Activated T-helper 2 cell treated with anti-CD3 and anti-CD28 coated beads, Interferon-gamma antibody, Interleukin-2, Interleukin-4, amounts not matched to agents 10 μg/mL and 5 μg/mL and 100 μg/mL, durations not matched to agents 14 hours and 24 hours and 36 hours (primary cell): ENCODE measurements at regions of chr12 and their contacts with region 1.

Region 1: DNA sequence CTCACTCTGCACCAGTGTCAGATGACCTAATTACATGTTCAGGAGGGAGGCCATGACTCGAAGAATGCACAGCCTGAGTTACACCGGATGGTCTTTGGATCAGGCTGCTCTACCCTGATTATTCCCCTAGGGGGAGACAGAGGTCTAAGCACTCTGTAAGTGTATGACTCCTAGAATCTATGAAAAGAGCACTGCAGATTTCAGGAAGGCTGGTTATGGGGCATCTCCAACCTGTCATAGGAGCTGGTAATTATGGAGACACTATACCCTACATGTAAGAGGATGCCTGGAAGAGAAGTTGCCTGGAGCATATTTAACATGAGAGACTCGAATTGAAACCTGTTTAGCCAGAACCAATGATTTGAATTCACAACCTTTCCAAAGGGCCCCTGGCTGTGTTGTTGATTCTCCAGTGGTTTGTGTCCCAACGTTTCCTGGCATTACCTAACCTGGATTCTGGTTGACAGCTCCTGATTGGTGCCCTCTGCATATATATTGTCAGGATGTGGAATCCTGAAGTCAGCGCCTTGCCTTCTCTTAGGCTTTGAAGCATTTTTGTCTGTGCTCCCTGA is at the start of gene MUCL1:
- DNase-seq: peak; percentile 55
- H3K4me3 Mint-ChIP-seq: no peak within 1 kb of the TSS
- H3K27ac Mint-ChIP-seq: no peak within 1 kb of the TSS
- H3K4me1 Mint-ChIP-seq: peaks cover 30% of the 10 kb centered on the region
- H3K27me3 Mint-ChIP-seq: peaks cover 5% of the 10 kb centered on the region
- total RNA-seq, gene MUCL1: 0.51 TPM in 1 of 2 replicates, not detected in the other

Region 2: DNA sequence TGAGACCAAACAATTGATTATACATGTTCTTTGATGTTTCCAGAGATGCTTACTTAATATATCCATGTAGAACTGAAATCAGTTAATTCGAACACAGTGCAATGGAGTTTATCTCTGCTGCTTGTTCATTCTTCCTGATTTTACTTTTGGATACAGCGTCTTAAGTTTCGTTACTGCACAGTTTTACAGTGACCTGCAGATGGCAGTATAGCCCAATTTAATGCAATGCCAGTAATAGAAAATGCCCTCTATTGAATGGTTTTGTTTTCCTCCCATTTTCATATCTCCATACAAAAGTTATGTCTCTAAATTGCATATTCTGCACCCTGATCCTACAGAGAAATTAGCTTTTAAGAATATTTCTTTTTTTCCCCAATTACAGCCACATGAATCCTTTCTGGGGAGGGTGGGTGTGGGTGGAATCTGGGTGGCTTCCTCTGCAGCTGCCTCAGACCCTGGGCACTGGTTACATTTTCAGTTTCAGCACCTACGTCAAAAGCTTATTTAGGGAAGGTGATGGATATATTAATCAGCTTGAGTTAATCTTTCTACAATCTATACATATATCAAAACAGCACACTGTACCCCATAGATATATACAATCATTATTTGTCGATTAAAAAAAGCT is 104.8 kb before region 1 on chr12:
- intact Hi-C with region 1: loop called (anchors 2 kb)
- DNase-seq: no peak
- H3K4me3 Mint-ChIP-seq: no peak overlapping the region
- H3K27ac Mint-ChIP-seq: no peak overlapping the region
- H3K4me1 Mint-ChIP-seq: peaks cover 16% of the 10 kb centered on the region
- H3K27me3 Mint-ChIP-seq: peaks cover 17% of the 10 kb centered on the region

Region 3: DNA sequence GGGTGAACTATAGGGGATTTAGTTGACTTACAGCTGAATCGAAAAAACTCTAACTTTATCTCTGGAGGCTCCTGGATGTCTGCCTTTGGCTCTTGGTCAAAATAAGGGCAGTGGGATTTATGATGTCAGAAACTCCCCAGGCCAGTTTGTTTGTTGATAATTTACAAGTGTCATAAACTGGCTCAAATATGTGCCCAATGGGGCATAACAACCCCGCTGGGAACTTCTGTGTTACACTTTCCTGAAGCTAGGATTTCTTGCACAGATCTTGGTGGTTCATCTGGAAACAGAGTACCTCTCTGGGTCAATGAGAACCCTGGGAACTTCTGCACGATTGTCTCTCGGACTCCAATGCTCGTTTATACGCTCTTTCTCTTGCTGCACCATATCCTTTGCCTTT is 58.4 kb before region 1 on chr12:
- intact Hi-C with region 1: no loop called
- DNase-seq: no peak
- H3K4me3 Mint-ChIP-seq: no peak overlapping the region
- H3K27ac Mint-ChIP-seq: no peak overlapping the region
- H3K4me1 Mint-ChIP-seq: no peaks in the 10 kb centered on the region
- H3K27me3 Mint-ChIP-seq: peaks cover 4% of the 10 kb centered on the region

Region 4: GRCh38 chr12:54958048-54958658 is 104.1 kb after region 1 on chr12:
- intact Hi-C with region 1: loop called (anchors 1 kb)
- DNase-seq: no peak
- H3K4me3 Mint-ChIP-seq: peak overlapping the region; percentile 46
- H3K27ac Mint-ChIP-seq: peak overlapping the region; percentile 86
- H3K4me1 Mint-ChIP-seq: peaks cover 80% of the 10 kb centered on the region
- H3K27me3 Mint-ChIP-seq: no peaks in the 10 kb centered on the region

Region 5: DNA sequence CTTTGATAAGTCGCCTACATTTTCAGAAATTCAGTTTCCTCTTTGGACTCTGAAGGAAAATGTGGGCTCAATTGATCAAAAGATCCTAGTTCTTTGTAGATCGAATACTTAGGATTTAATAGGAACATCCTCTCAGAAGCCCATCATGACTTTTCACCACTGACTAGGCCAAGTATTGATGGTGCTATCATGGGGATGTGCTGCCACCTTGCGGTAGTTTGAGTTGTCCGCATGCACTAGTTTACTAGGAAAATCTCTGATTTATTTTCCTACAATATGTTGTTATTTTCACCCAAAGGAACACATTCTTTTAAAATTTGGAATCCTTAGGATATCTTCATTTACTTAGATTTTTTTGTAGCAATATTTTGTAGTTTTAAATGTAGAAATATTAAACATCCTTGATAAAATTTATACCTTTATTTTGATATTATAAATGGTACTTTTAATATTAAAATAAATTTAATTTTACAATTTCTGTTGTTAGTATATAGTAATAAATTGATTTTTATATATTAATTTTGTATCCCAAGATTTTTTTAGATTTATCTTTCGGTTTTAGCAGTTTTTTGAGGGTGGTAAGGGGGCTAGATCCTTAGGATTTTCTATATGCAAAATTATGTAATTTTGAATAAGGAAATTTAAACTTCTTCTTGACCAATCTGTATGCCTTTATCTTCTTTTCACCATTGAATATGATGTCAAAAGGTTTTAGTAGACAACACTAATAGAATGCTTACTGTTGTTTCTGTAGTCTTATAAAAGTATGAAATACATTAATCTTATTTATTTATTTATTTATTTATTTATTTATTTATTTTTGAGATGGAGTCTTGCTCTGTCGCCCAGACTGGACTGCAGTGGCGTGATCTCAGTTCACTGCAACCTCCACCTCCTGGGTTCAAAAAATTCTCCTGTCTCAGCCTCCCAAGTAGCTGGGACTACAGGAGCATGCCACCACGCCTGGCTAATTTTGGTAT is 219.3 kb after region 1 on chr12:
- intact Hi-C with region 1: loop called (anchors 5 kb)
- DNase-seq: peak; percentile 60
- H3K4me3 Mint-ChIP-seq: no peak overlapping the region
- H3K27ac Mint-ChIP-seq: no peak overlapping the region
- H3K4me1 Mint-ChIP-seq: peaks cover 10% of the 10 kb centered on the region
- H3K27me3 Mint-ChIP-seq: peaks cover 31% of the 10 kb centered on the region

Region 6: DNA sequence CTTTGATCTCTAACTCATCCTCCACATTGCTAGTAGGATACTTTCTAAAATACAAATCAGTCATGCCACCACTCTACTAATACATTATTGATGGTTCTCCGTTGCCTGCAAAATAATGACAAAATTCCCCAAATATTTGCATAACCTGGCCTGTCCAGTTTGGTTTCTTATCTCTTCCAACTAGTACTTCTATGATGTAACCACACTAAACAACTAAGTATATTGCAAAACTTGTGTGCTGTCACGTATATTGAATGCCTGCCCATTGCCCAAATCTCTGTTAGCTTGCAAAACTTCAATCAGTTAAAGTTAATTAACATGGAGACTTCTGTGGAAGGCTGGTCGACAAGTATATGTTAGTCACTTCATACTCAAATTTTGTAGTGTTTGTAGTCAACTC is 396.9 kb after region 1 on chr12:
- intact Hi-C with region 1: no loop called
- DNase-seq: no peak
- H3K4me3 Mint-ChIP-seq: no peak overlapping the region
- H3K27ac Mint-ChIP-seq: no peak overlapping the region
- H3K4me1 Mint-ChIP-seq: no peaks in the 10 kb centered on the region
- H3K27me3 Mint-ChIP-seq: peaks cover 16% of the 10 kb centered on the region